Naive thymus-derived CD4-positive, alpha-beta T cell (primary cell): ENCODE measurements at regions of chr11 and their contacts with region 1.

Region 1: DNA sequence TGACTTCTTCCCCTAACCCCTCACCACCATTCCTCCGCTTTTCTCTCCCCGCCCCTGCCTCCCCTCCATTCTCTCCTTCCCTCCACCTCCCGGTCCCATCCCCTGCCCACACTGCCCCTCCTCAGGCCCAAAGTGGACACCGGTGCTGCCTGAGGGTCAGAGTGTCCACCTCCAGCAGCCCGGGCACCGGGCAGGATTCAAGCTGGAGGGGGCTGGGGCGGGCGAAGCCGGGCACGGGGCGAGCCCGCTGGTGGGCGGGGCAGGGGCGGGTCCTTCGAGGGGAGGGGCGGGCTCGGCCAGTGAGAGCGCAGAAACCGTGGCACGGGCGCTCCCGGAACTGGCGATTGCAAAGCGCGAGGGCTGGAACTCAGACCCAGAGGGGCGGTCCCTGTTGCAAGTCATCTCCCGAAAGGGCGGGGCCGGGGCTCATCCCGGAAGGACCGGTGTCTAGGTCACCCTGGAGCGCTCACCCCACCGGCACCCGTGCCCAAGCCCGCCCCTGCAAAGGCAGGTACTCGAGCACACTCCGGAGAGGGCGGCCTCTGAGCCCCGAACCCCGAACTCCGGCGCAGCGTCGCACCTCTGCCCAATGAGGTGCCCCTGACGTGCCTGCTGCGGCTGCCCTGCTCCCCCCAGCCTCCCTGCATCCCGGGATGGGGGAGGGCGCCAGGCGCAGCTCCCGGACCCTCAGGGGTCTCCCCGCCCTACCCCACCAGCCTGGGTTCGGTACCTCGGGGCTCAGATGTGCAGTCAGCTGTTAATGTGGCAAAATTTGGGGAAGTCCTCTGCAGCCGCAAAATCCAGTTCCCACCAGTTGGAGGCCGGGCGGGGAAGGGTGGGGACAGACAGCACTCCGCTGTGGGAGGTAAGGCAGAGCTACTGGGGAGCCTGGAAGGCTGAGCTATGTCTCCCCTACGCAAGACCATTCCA is 16.5 kb upstream of the CDKN1C start:
- DNase-seq: peak; percentile 69 to 92 (median 76)
- ATAC-seq: peak; percentile 91
- H3K4me3 ChIP-seq: peak overlapping the region; percentile 66
- H3K4me3 Mint-ChIP-seq: peak overlapping the region; percentile 43 to 82 (median 78)
- H3K27ac ChIP-seq: peak overlapping the region; percentile 65
- H3K27ac Mint-ChIP-seq: peak overlapping the region in 8 of 9 donors; percentile 38 to 83 (median 70)
- H3K4me1 ChIP-seq: peaks cover 32 to 35% of the 10 kb centered on the region in 2 donors
- H3K4me1 Mint-ChIP-seq: peaks cover 42 to 55% (median 44%) of the 10 kb centered on the region in 7 donors
- H3K27me3 ChIP-seq: no peaks in the 10 kb centered on the region
- H3K27me3 Mint-ChIP-seq: no peaks in the 10 kb centered on the region

Region 2: DNA sequence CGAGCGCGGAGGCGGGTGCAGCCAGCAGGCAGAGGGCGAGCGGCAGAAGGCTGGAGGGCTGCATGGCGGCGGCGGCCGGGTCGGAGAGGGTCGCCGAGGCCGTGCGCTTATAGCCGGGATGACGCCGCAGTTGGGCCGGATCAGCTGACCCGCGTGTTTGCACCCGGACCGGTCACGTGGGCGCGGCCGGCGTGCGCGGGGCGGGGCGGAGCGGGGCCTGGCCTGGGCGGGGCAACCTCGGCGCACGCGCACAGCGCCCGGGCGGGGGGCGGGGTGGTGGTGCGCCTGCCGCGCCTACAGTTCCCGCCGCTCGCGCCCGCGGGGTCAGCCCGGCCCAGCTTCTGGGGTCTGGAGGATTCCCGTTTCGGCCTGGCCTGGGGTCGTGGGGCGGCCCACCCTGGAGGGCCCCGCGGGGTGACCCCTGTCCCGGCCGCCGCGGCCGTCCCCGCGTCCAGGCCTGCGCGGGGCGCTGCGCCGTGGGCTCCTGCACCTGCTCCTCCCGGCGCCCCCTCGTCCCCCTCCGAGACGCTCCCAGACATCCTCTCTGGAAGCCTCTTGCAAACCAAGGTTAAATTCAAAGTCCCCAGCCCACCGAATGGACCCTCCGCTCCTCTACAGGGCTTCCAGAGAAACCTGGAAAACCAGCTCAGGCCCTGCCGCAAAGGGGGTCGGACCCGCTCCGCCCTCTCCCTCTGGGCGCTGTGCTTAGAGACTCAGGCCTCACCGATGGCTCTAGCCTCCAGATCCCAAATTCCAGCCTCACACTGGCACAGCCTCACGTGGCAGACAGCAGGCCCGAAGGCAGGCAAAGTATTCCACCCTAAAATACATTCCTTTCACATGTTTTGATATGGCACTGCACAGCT is 1138.1 kb before region 1 on chr11 and contains the start of gene CTSD:
- CTCF ChIA-PET with region 1: no interaction called
- POLR2A ChIA-PET with region 1: no interaction called
- intact Hi-C with region 1: loop called in 1 of 2 experiments (anchors 5 kb)
- DNase-seq: peak; percentile 76 to 99 (median 83)
- ATAC-seq: peak; percentile 87
- H3K4me3 ChIP-seq: peak within 1 kb of the TSS; percentile 70
- H3K4me3 Mint-ChIP-seq: peak within 1 kb of the TSS; percentile 86 to 96 (median 91)
- H3K27ac ChIP-seq: peak within 1 kb of the TSS; percentile 82
- H3K27ac Mint-ChIP-seq: peak within 1 kb of the TSS; percentile 84 to 92 (median 87)
- H3K4me1 ChIP-seq: peaks cover 33 to 39% of the 10 kb centered on the region in 2 donors
- H3K4me1 Mint-ChIP-seq: peaks cover 14 to 41% (median 33%) of the 10 kb centered on the region in 7 donors
- H3K27me3 ChIP-seq: no peaks in the 10 kb centered on the region
- H3K27me3 Mint-ChIP-seq: no peaks in the 10 kb centered on the region
- total RNA-seq, gene CTSD: 103 to 378 (median 186) TPM

Region 3: GRCh38 chr11:2444821-2445745 is 457.0 kb before region 1 on chr11 and contains the start of gene KCNQ1:
- CTCF ChIA-PET with region 1: no interaction called
- POLR2A ChIA-PET with region 1: no interaction called
- intact Hi-C with region 1: loop called in 1 of 2 experiments (anchors 5 kb)
- DNase-seq: peak in 8 of 9 donors; percentile 26 to 75 (median 46)
- ATAC-seq: peak; percentile 74
- H3K4me3 ChIP-seq: peak within 1 kb of the TSS; percentile 71
- H3K4me3 Mint-ChIP-seq: peak within 1 kb of the TSS; percentile 93 to 99 (median 96)
- H3K27ac ChIP-seq: peak within 1 kb of the TSS; percentile 52
- H3K27ac Mint-ChIP-seq: peak within 1 kb of the TSS; percentile 73 to 92 (median 89)
- H3K4me1 ChIP-seq: peaks cover 22 to 56% of the 10 kb centered on the region in 2 donors
- H3K4me1 Mint-ChIP-seq: peaks cover 22 to 53% (median 41%) of the 10 kb centered on the region in 7 donors
- H3K27me3 ChIP-seq: no peaks in the 10 kb centered on the region
- H3K27me3 Mint-ChIP-seq: peaks cover 0 to 20% (median 0%) of the 10 kb centered on the region in 5 donors
- total RNA-seq, gene KCNQ1: 14.7 to 46.4 (median 41.4) TPM

Region 4: GRCh38 chr11:2860636-2861035 is 41.5 kb before region 1 on chr11:
- CTCF ChIA-PET with region 1: no interaction called
- POLR2A ChIA-PET with region 1: no interaction called
- intact Hi-C with region 1: no loop called
- DNase-seq: no peak
- ATAC-seq: peak; percentile 68
- H3K4me3 ChIP-seq: no peak overlapping the region
- H3K4me3 Mint-ChIP-seq: no peak overlapping the region
- H3K27ac ChIP-seq: no peak overlapping the region
- H3K27ac Mint-ChIP-seq: no peak overlapping the region
- H3K4me1 ChIP-seq: no peaks in the 10 kb centered on the region
- H3K4me1 Mint-ChIP-seq: peaks cover 0 to 6% (median 0%) of the 10 kb centered on the region in 7 donors
- H3K27me3 ChIP-seq: no peaks in the 10 kb centered on the region
- H3K27me3 Mint-ChIP-seq: peaks cover 23 to 43% (median 38%) of the 10 kb centered on the region in 5 donors

Region 5: GRCh38 chr11:2930704-2931428 is 28.7 kb after region 1 on chr11:
- CTCF ChIA-PET with region 1: interaction called, 5 read pairs
- POLR2A ChIA-PET with region 1: no interaction called
- intact Hi-C with region 1: loop called (anchors 1 to 2 kb)
- DNase-seq: peak in 1 of 9 donors; percentile 61
- ATAC-seq: peak; percentile 14
- H3K4me3 ChIP-seq: peak overlapping the region; percentile 61
- H3K4me3 Mint-ChIP-seq: peak overlapping the region; percentile 66 to 86 (median 78)
- H3K27ac ChIP-seq: no peak overlapping the region
- H3K27ac Mint-ChIP-seq: peak overlapping the region in 4 of 9 donors; percentile 32 to 76 (median 46)
- H3K4me1 ChIP-seq: peaks cover 13 to 20% of the 10 kb centered on the region in 2 donors
- H3K4me1 Mint-ChIP-seq: peaks cover 14 to 35% (median 20%) of the 10 kb centered on the region in 7 donors
- H3K27me3 ChIP-seq: peaks cover 3 to 4% of the 10 kb centered on the region in 2 donors
- H3K27me3 Mint-ChIP-seq: peaks cover 4 to 30% (median 8%) of the 10 kb centered on the region in 5 donors

Region 6: DNA sequence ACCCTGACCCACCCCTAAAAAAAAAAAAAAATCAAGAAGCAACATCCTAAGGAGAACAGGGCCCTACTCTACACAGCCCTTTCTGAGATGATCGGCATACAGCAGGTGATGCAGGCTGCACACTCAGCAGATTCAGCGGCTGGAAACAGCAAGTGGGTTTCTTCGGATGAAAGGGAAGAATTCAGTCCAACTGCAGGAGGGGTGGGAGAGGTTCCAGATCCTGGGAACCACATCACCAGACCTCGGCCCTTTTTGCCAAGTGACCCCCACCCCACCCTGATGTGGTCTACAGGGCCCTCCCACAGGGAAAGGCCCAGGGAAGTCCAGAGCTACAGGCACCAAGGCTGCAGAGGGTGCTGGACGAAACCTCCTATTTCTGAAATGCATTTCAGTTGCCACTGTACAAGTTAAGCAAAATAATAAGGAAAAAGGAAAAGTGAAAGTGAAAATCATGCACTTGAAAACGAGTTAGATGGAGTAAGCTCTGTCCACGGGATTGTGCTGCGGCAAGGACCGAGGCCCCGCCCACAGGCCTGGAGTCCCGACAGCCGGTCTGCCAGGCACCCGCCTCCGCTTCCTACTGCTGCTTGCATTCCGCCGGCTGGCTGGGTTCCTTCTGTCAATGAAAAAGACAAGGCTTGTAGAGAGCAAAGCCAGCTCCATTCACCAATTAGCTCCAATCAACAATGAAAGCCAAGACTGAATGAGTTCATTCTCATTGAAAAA is 43.1 kb after region 1 on chr11:
- CTCF ChIA-PET with region 1: no interaction called
- POLR2A ChIA-PET with region 1: no interaction called
- intact Hi-C with region 1: loop called in 1 of 2 experiments (anchors 5 kb)
- DNase-seq: peak in 7 of 9 donors; percentile 33 to 65 (median 48)
- ATAC-seq: peak; percentile 52
- H3K4me3 ChIP-seq: no peak overlapping the region
- H3K4me3 Mint-ChIP-seq: peak overlapping the region; percentile 25 to 76 (median 56)
- H3K27ac ChIP-seq: peak overlapping the region; percentile 41
- H3K27ac Mint-ChIP-seq: peak overlapping the region; percentile 0 to 86 (median 80)
- H3K4me1 ChIP-seq: peaks cover 0 to 17% of the 10 kb centered on the region in 2 donors
- H3K4me1 Mint-ChIP-seq: peaks cover 27 to 66% (median 59%) of the 10 kb centered on the region in 7 donors
- H3K27me3 ChIP-seq: no peaks in the 10 kb centered on the region
- H3K27me3 Mint-ChIP-seq: no peaks in the 10 kb centered on the region

Region 7: GRCh38 chr11:3057069-3057963 is 155.2 kb after region 1 on chr11 and contains the start of gene CARS1:
- CTCF ChIA-PET with region 1: no interaction called
- POLR2A ChIA-PET with region 1: no interaction called
- intact Hi-C with region 1: loop called in 1 of 2 experiments (anchors 1 kb)
- DNase-seq: peak; percentile 82 to 93 (median 89)
- ATAC-seq: peak; percentile 99
- H3K4me3 ChIP-seq: peak within 1 kb of the TSS; percentile 85
- H3K4me3 Mint-ChIP-seq: peak within 1 kb of the TSS; percentile 86 to 95 (median 89)
- H3K27ac ChIP-seq: peak within 1 kb of the TSS; percentile 91
- H3K27ac Mint-ChIP-seq: peak within 1 kb of the TSS; percentile 44 to 89 (median 87)
- H3K4me1 ChIP-seq: peaks cover 14% of the 10 kb centered on the region in 2 donors
- H3K4me1 Mint-ChIP-seq: peaks cover 25 to 42% (median 39%) of the 10 kb centered on the region in 7 donors
- H3K27me3 ChIP-seq: no peaks in the 10 kb centered on the region
- H3K27me3 Mint-ChIP-seq: no peaks in the 10 kb centered on the region
- total RNA-seq, gene CARS1: 27.8 to 70.4 (median 53.7) TPM

Region 8: GRCh38 chr11:3378426-3379423 is 476.6 kb after region 1 on chr11 and contains the start of gene ZNF195:
- CTCF ChIA-PET with region 1: no interaction called
- POLR2A ChIA-PET with region 1: no interaction called
- intact Hi-C with region 1: loop called in 1 of 2 experiments (anchors 5 kb)
- DNase-seq: peak; percentile 91 to 97 (median 95)
- ATAC-seq: peak; percentile 100
- H3K4me3 ChIP-seq: peak within 1 kb of the TSS; percentile 96
- H3K4me3 Mint-ChIP-seq: peak within 1 kb of the TSS; percentile 95 to 100 (median 98)
- H3K27ac ChIP-seq: peak within 1 kb of the TSS; percentile 90
- H3K27ac Mint-ChIP-seq: peak within 1 kb of the TSS; percentile 93 to 98 (median 98)
- H3K4me1 ChIP-seq: peaks cover 17 to 23% of the 10 kb centered on the region in 2 donors
- H3K4me1 Mint-ChIP-seq: peaks cover 30 to 67% (median 61%) of the 10 kb centered on the region in 7 donors
- H3K27me3 ChIP-seq: no peaks in the 10 kb centered on the region
- H3K27me3 Mint-ChIP-seq: no peaks in the 10 kb centered on the region
- total RNA-seq, gene ZNF195: 18.4 to 39.0 (median 33.7) TPM